Activated CD8-positive, alpha-beta T cell treated with anti-CD3 and anti-CD28 coated beads, Interleukin-2, amount 10 ng/mL, durations not matched to agents 7 days and 5 days (primary cell): ENCODE measurements at regions of chr6 and their contacts with region 1.

Region 1: GRCh38 chr6:30914076-30914853 is at the start of gene VARS2:
- DNase-seq: peak; percentile 87
- ATAC-seq: peak; percentile 97
- H3K4me3 Mint-ChIP-seq: peak within 1 kb of the TSS; percentile 86
- H3K27ac Mint-ChIP-seq: peak within 1 kb of the TSS; percentile 89
- H3K4me1 Mint-ChIP-seq: peaks cover 29% of the 10 kb centered on the region
- H3K27me3 Mint-ChIP-seq: no peaks in the 10 kb centered on the region
- total RNA-seq, gene VARS2: 38.4 to 38.8 TPM

Region 2: DNA sequence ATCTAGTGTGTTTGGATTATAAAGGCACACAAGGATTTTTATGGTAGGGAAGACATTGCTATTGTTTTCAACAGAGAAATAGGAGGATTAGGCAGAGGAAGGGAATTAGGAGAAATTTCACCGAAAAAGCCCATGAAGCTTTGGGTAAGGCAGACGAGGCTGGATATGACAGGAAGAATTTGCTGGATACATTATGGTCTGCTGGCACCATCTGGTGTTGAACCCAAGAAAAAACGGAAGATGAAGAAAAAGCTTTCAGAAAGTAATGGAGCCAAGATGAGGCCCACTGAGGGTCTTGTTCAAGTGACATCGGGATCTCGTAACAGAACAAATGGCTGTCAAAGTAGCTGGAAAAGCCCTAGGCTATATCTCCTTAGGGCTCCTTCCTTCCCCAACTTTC is 1687.0 kb before region 1 on chr6:
- CTCF ChIA-PET with region 1: no interaction called
- POLR2A ChIA-PET with region 1: no interaction called
- DNase-seq: no peak
- ATAC-seq: no peak
- H3K4me3 Mint-ChIP-seq: no peak overlapping the region
- H3K27ac Mint-ChIP-seq: no peak overlapping the region
- H3K4me1 Mint-ChIP-seq: no peaks in the 10 kb centered on the region
- H3K27me3 Mint-ChIP-seq: peaks cover 16% of the 10 kb centered on the region

Region 3: DNA sequence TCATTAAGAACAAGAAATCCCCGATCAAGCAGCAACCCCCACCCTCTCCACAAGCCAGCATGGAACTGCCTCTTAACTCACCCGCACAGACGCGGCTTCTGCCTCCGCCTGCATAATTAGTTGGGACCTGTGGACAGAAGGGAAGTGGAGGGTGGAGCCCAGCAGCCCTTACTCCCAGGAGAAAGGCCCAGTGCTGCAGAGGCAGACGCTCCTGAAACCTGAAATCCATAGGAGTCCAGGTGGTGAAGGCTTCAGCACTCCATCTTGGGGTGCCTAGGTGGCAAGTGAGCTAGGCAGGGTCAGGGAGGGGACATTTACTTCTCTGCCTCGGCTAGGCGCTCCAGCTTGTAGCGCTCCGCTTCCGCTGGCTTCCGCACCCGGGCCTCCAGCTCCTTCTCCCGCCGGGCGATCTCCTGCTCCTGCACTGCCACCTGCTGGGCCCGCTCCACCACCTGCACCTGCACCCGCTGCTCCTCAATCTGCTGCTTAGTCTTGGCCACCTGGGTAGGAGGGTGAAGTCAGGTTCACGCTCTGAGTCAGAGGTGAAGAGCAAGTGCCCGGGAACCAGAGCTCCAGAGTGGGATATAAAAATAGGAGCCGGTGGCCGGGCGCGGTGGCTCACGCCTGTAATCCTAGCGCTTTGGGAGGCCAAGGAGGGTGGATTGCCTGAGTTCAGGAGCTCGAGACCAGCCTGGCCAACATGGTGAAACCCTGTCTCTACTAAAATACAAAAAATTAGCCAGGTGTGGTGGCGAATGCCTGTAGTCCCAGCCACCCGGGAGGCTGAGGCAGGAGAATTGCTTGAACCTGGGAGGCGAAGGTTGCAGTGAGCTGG is 183.4 kb before region 1 on chr6:
- CTCF ChIA-PET with region 1: interaction called, 14 read pairs
- POLR2A ChIA-PET with region 1: no interaction called
- DNase-seq: peak; percentile 92
- ATAC-seq: peak; percentile 95
- H3K4me3 Mint-ChIP-seq: peak overlapping the region; percentile 44
- H3K27ac Mint-ChIP-seq: peak overlapping the region; percentile 70
- H3K4me1 Mint-ChIP-seq: peaks cover 61% of the 10 kb centered on the region
- H3K27me3 Mint-ChIP-seq: no peaks in the 10 kb centered on the region

Region 4: GRCh38 chr6:30836431-30836866 is 77.8 kb before region 1 on chr6:
- CTCF ChIA-PET with region 1: interaction called, 69 read pairs
- POLR2A ChIA-PET with region 1: interaction called, 3 read pairs
- DNase-seq: no peak
- ATAC-seq: no peak
- H3K4me3 Mint-ChIP-seq: no peak overlapping the region
- H3K27ac Mint-ChIP-seq: no peak overlapping the region
- H3K4me1 Mint-ChIP-seq: peaks cover 51% of the 10 kb centered on the region
- H3K27me3 Mint-ChIP-seq: no peaks in the 10 kb centered on the region

Region 5: DNA sequence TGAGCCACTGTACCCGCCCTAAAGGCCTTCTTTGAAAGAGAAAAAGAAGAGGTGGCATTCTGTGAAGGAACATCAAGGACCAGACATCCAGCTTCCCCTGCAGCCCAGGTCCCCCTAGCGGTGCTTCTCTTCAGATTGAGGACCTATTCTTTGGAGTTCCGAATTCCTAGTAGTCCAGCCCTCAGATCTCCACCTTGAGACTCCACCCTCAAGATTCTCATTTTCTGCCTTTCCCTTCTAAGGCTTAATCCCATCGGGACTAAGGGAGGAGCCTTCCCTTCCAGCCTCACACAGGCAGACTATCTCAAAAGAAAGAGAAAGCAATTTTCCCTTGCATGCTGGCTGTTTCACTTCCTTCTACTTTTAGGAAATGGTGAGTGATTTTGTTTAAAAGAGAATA is 128.5 kb after region 1 on chr6:
- CTCF ChIA-PET with region 1: interaction called, 26 read pairs
- POLR2A ChIA-PET with region 1: no interaction called
- DNase-seq: peak; percentile 40
- ATAC-seq: no peak
- H3K4me3 Mint-ChIP-seq: no peak overlapping the region
- H3K27ac Mint-ChIP-seq: no peak overlapping the region
- H3K4me1 Mint-ChIP-seq: peaks cover 2% of the 10 kb centered on the region
- H3K27me3 Mint-ChIP-seq: peaks cover 14% of the 10 kb centered on the region

Region 6: GRCh38 chr6:31079656-31080261 is 165.5 kb after region 1 on chr6:
- CTCF ChIA-PET with region 1: interaction called, 97 read pairs
- POLR2A ChIA-PET with region 1: no interaction called
- DNase-seq: peak; percentile 82
- ATAC-seq: peak; percentile 85
- H3K4me3 Mint-ChIP-seq: peak overlapping the region; percentile 40
- H3K27ac Mint-ChIP-seq: no peak overlapping the region
- H3K4me1 Mint-ChIP-seq: peaks cover 9% of the 10 kb centered on the region
- H3K27me3 Mint-ChIP-seq: peaks cover 6% of the 10 kb centered on the region

Region 7: GRCh38 chr6:31128093-31128676 is 213.9 kb after region 1 on chr6:
- CTCF ChIA-PET with region 1: interaction called, 18 read pairs
- POLR2A ChIA-PET with region 1: no interaction called
- DNase-seq: peak; percentile 82
- ATAC-seq: peak; percentile 68
- H3K4me3 Mint-ChIP-seq: no peak overlapping the region
- H3K27ac Mint-ChIP-seq: no peak overlapping the region
- H3K4me1 Mint-ChIP-seq: no peaks in the 10 kb centered on the region
- H3K27me3 Mint-ChIP-seq: peaks cover 12% of the 10 kb centered on the region

Region 8: GRCh38 chr6:31163922-31164321 is 249.7 kb after region 1 on chr6:
- CTCF ChIA-PET with region 1: no interaction called
- POLR2A ChIA-PET with region 1: no interaction called
- DNase-seq: no peak
- ATAC-seq: no peak
- H3K4me3 Mint-ChIP-seq: no peak overlapping the region
- H3K27ac Mint-ChIP-seq: no peak overlapping the region
- H3K4me1 Mint-ChIP-seq: peaks cover 31% of the 10 kb centered on the region
- H3K27me3 Mint-ChIP-seq: no peaks in the 10 kb centered on the region